Endothelial cell of umbilical vein (primary cell): ENCODE measurements at regions of chr20 and their contacts with region 1.

Region 1: DNA sequence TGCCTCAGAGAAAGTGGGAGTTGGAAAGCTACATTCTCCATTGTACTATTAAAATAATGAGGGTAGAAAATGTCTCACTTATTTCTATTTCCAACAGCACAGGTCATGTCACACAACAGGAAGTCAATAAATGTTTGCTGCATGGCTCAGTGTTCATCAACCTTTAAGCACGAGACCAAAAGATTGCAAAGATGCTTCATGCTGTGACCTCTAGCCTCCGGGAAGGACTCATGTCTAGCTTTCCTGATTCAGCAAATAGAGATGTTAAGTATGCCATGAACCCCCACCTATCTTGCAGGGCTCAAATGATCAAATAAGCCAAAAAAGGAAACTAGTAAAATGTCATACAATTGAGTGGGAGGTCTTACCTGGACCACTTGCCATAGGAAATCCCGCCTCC is 57.4 kb downstream of the NCOA6 start:
- DNase-seq: peak; percentile 14
- H3K4me3 ChIP-seq: no peak overlapping the region
- H3K27ac ChIP-seq: no peak overlapping the region
- H3K4me1 ChIP-seq: peaks cover 12% of the 10 kb centered on the region
- H3K27me3 ChIP-seq: no peaks in the 10 kb centered on the region
- CTCF ChIP-seq: no peak
- POLR2A ChIP-seq: no peak

Region 2: GRCh38 chr20:34022154-34022838 is 745.8 kb before region 1 on chr20:
- CTCF ChIA-PET with region 1: no interaction called
- POLR2A ChIA-PET with region 1: no interaction called
- dilution Hi-C with region 1: no loop called
- intact Hi-C with region 1: no loop called
- DNase-seq: peak; percentile 35
- H3K4me3 ChIP-seq: no peak overlapping the region
- H3K27ac ChIP-seq: no peak overlapping the region
- H3K4me1 ChIP-seq: no peaks in the 10 kb centered on the region
- H3K27me3 ChIP-seq: no peaks in the 10 kb centered on the region
- CTCF ChIP-seq: peak; percentile 17 to 33
- POLR2A ChIP-seq: no peak

Region 3: GRCh38 chr20:34538671-34539123 is 229.4 kb before region 1 on chr20:
- CTCF ChIA-PET with region 1: interaction called, 53 read pairs
- POLR2A ChIA-PET with region 1: no interaction called
- dilution Hi-C with region 1: no loop called
- intact Hi-C with region 1: loop called (anchors 1 kb)
- DNase-seq: peak; percentile 45
- H3K4me3 ChIP-seq: no peak overlapping the region
- H3K27ac ChIP-seq: no peak overlapping the region
- H3K4me1 ChIP-seq: no peaks in the 10 kb centered on the region
- H3K27me3 ChIP-seq: no peaks in the 10 kb centered on the region
- CTCF ChIP-seq: peak; percentile 75 to 87
- POLR2A ChIP-seq: no peak

Region 4: GRCh38 chr20:34579191-34579978 is 188.7 kb before region 1 on chr20:
- CTCF ChIA-PET with region 1: interaction called, 92 read pairs
- POLR2A ChIA-PET with region 1: no interaction called
- dilution Hi-C with region 1: no loop called
- intact Hi-C with region 1: loop called (anchors 1 kb)
- DNase-seq: peak; percentile 83
- H3K4me3 ChIP-seq: no peak overlapping the region
- H3K27ac ChIP-seq: no peak overlapping the region
- H3K4me1 ChIP-seq: peaks cover 14% of the 10 kb centered on the region
- H3K27me3 ChIP-seq: no peaks in the 10 kb centered on the region
- CTCF ChIP-seq: peak; percentile 74 to 77
- POLR2A ChIP-seq: no peak

Region 5: DNA sequence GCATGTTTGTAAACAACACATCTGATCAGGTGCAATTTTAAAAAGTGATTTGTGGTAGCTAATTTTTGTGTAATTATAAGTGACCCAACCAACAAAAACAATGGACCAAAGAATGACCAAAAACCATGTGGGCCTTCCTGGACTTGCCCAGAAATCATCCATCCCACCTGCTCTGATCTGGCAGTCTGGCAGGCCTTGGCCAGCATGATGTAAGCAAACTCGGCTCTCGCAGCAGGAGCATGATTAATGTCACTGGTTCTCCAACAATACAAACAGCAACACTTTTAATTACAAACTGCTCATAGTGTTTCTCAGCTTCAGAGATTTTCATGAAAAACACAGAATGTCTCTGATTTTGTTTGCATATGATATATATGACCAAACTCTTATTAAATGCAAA is 47.8 kb before region 1 on chr20:
- CTCF ChIA-PET with region 1: interaction called, 11 read pairs
- POLR2A ChIA-PET with region 1: no interaction called
- dilution Hi-C with region 1: no loop called
- intact Hi-C with region 1: no loop called
- DNase-seq: no peak
- H3K4me3 ChIP-seq: no peak overlapping the region
- H3K27ac ChIP-seq: no peak overlapping the region
- H3K4me1 ChIP-seq: no peaks in the 10 kb centered on the region
- H3K27me3 ChIP-seq: no peaks in the 10 kb centered on the region
- CTCF ChIP-seq: no peak
- POLR2A ChIP-seq: no peak

Region 6: GRCh38 chr20:34753706-34754461 is 14.2 kb before region 1 on chr20:
- CTCF ChIA-PET with region 1: interaction called, 47 read pairs
- POLR2A ChIA-PET with region 1: no interaction called
- dilution Hi-C with region 1: no loop called
- intact Hi-C with region 1: no loop called
- DNase-seq: no peak
- H3K4me3 ChIP-seq: no peak overlapping the region
- H3K27ac ChIP-seq: no peak overlapping the region
- H3K4me1 ChIP-seq: no peaks in the 10 kb centered on the region
- H3K27me3 ChIP-seq: no peaks in the 10 kb centered on the region
- CTCF ChIP-seq: no peak
- POLR2A ChIP-seq: no peak

Region 7: GRCh38 chr20:34797012-34797995 is 29.2 kb after region 1 on chr20:
- CTCF ChIA-PET with region 1: interaction called, 19 read pairs
- POLR2A ChIA-PET with region 1: no interaction called
- dilution Hi-C with region 1: no loop called
- intact Hi-C with region 1: no loop called
- DNase-seq: no peak
- H3K4me3 ChIP-seq: no peak overlapping the region
- H3K27ac ChIP-seq: no peak overlapping the region
- H3K4me1 ChIP-seq: no peaks in the 10 kb centered on the region
- H3K27me3 ChIP-seq: no peaks in the 10 kb centered on the region
- CTCF ChIP-seq: no peak
- POLR2A ChIP-seq: no peak